WTC11 (cell line): ENCODE measurements at regions of chr5 and their contacts with region 1.

Region 1: DNA sequence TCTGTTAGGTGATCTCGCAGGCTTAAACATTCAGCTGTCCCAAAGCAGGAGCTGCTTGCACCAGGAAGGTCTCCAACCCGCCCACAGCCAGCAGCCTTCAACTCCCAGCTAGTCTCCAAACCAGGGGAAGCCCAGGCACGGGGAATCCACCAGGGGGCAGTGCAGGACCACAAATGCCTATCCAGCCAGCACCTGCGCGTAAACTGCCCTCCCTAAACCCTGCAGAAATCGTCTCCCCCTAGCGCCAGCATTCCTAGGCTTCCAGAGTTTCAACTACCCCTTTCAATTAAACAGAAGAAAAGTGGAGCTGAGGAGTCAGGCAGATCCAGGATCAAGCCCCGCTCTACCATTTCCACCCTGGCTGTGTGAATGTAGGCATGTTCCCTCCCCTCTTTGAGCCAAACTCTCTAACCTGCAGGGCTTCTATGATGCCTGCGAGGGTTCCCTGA is 72.0 kb downstream of the HRH2 start:
- DNase-seq: peak; percentile 100
- ATAC-seq: peak; percentile 87
- H3K4me3 Mint-ChIP-seq: peak overlapping the region; percentile 74
- H3K27ac Mint-ChIP-seq: no peak overlapping the region
- H3K4me1 Mint-ChIP-seq: peaks cover 27% of the 10 kb centered on the region
- H3K27me3 Mint-ChIP-seq: peaks cover 5% of the 10 kb centered on the region
- CTCF ChIP-seq: peak; percentile 98

Region 2: GRCh38 chr5:175542232-175542965 is 187.5 kb before region 1 on chr5:
- CTCF ChIA-PET with region 1: interaction called, 11 read pairs
- POLR2A ChIA-PET with region 1: no interaction called
- DNase-seq: no peak
- ATAC-seq: no peak
- H3K4me3 Mint-ChIP-seq: no peak overlapping the region
- H3K27ac Mint-ChIP-seq: no peak overlapping the region; the same call in 1 of the 2 replicates
- H3K4me1 Mint-ChIP-seq: peaks cover 71% of the 10 kb centered on the region
- H3K27me3 Mint-ChIP-seq: peaks cover 13% of the 10 kb centered on the region
- CTCF ChIP-seq: no peak

Region 3: GRCh38 chr5:175677571-175677970 is 52.3 kb before region 1 on chr5:
- CTCF ChIA-PET with region 1: interaction called, 13 read pairs
- POLR2A ChIA-PET with region 1: no interaction called
- DNase-seq: no peak
- ATAC-seq: no peak
- H3K4me3 Mint-ChIP-seq: no peak overlapping the region
- H3K27ac Mint-ChIP-seq: no peak overlapping the region
- H3K4me1 Mint-ChIP-seq: peaks cover 33% of the 10 kb centered on the region
- H3K27me3 Mint-ChIP-seq: no peaks in the 10 kb centered on the region
- CTCF ChIP-seq: no peak

Region 4: DNA sequence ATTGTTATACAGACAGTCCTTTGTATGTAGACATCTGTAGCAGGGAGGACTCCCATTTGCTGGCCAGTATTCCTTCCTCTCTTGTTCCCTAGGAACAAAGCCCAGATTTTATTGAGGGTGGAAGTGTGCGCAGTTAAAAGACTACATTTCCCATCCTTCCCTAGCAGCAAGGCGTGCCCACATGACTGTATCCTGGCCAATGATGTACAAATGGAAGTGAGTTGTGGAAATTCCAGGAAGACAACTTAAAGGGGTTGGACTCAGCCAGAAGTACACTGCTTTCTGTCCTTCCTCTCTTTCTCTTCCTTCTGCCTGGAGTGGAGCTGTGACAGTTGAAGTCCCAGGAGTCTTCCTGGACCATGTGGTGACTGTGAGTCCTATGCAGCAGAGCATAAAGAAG is 17.0 kb after region 1 on chr5:
- CTCF ChIA-PET with region 1: interaction called, 54 read pairs
- POLR2A ChIA-PET with region 1: no interaction called
- DNase-seq: no peak
- ATAC-seq: peak; percentile 92
- H3K4me3 Mint-ChIP-seq: peak overlapping the region; percentile 43
- H3K27ac Mint-ChIP-seq: no peak overlapping the region
- H3K4me1 Mint-ChIP-seq: peaks cover 15% of the 10 kb centered on the region
- H3K27me3 Mint-ChIP-seq: peaks cover 3% of the 10 kb centered on the region; the same call in 1 of the 2 replicates
- CTCF ChIP-seq: no peak

Region 5: DNA sequence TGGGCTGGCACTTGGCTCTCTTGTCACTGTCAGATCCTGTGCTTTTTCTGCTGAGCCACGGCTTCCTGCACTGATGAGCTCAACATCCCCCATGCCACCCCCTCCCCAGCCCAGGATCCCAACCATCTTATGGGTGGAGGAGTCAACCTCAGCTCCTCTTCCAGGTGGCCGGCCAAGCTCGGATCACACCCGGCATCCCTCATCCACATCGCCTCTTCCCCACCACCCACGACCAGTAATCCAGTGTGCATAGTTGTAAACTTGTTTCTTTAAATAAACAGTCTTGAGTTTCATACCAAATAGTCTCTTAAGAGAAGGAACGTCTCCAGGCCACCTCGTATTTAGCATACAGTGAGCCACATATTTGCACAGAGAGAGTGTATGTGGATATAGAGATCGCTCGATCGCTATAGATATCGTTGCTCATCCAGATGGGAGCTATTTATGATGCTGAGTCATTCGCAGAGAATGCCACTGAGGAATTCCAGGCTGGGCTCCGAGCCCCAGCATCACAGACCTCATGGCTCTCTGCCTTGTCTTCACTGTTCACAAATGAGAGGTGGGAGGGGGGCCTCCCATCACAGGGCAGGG is 79.8 kb after region 1 on chr5:
- CTCF ChIA-PET with region 1: interaction called, 12 read pairs
- POLR2A ChIA-PET with region 1: no interaction called
- DNase-seq: no peak
- ATAC-seq: peak; percentile 69
- H3K4me3 Mint-ChIP-seq: no peak overlapping the region
- H3K27ac Mint-ChIP-seq: no peak overlapping the region
- H3K4me1 Mint-ChIP-seq: peaks cover 20% of the 10 kb centered on the region
- H3K27me3 Mint-ChIP-seq: no peaks in the 10 kb centered on the region
- CTCF ChIP-seq: no peak

Region 6: GRCh38 chr5:175867587-175868347 is 137.9 kb after region 1 on chr5:
- CTCF ChIA-PET with region 1: interaction called, 149 read pairs
- POLR2A ChIA-PET with region 1: interaction called, 12 read pairs
- DNase-seq: peak; percentile 65
- ATAC-seq: peak; percentile 59
- H3K4me3 Mint-ChIP-seq: no peak overlapping the region
- H3K27ac Mint-ChIP-seq: no peak overlapping the region
- H3K4me1 Mint-ChIP-seq: peaks cover 30% of the 10 kb centered on the region
- H3K27me3 Mint-ChIP-seq: peaks cover 15% of the 10 kb centered on the region
- CTCF ChIP-seq: peak; percentile 28; the same call in 1 of the 2 replicates

Region 7: DNA sequence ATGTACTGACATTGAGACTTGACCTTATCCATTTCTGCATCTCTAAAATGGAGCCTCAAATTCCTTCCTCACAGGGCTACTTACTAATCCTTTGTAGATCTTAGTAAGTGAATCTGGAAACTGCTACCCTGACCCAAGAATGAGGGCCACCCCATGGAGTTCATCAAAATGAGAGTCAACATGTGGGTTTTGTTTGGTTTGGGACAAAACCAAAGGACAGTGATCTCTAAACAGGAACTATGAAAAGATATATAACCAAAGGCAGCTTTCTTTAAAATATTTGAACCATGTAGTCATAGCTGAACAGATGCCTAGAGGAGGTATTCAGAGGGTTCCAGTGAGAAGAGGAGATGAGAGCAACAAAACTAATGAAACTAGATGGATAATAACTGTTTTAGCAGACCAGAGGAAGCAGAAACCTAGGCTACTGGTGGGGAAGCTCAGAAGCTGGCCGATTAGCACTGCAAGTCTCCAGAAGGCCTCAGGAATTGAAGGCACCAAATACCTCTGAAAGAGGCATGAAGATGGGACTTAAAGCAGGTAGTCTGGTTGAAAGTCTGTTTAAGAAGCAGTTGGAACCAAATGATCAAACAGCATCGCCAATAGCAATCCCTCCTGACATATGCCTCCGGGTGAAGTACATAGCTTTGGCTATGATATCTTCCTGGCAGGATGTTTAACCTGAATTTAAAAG is 192.5 kb after region 1 on chr5:
- CTCF ChIA-PET with region 1: interaction called, 14 read pairs
- POLR2A ChIA-PET with region 1: no interaction called
- DNase-seq: no peak
- ATAC-seq: no peak
- H3K4me3 Mint-ChIP-seq: no peak overlapping the region
- H3K27ac Mint-ChIP-seq: no peak overlapping the region
- H3K4me1 Mint-ChIP-seq: no peaks in the 10 kb centered on the region
- H3K27me3 Mint-ChIP-seq: no peaks in the 10 kb centered on the region
- CTCF ChIP-seq: no peak